ENCODE measurements at regions of chr6 and their contacts with region 1.

Region 1: GRCh38 chr6:97401533-97401932 is 118.5 kb upstream of the MMS22L start:
- DNase-seq: no peak
- H3K4me3 ChIP-seq: no peak overlapping the region
- CTCF ChIP-seq: no peak
- POLR2A ChIP-seq: no peak

Region 2: GRCh38 chr6:97068211-97068610 is 333.3 kb before region 1 on chr6:
- intact Hi-C with region 1: loop called (anchors 10 kb)
- DNase-seq: no peak
- H3K4me3 ChIP-seq: no peak overlapping the region
- CTCF ChIP-seq: no peak
- POLR2A ChIP-seq: no peak

Region 3: GRCh38 chr6:97594844-97595243 is 193.3 kb after region 1 on chr6:
- intact Hi-C with region 1: no loop called
- DNase-seq: no peak
- H3K4me3 ChIP-seq: no peak overlapping the region
- CTCF ChIP-seq: no peak
- POLR2A ChIP-seq: no peak